ENCODE measurements at regions of chr14 and their contacts with region 1.

Region 1: GRCh38 chr14:21103710-21104447 is 3.0 kb downstream of the TMEM253 start:
- DNase-seq: peak; percentile 92
- H3K4me3 ChIP-seq: peak overlapping the region; percentile 82 to 86
- H3K27ac ChIP-seq: peak overlapping the region; percentile 90 to 99
- H3K4me1 ChIP-seq: peaks cover 18 to 39% of the 10 kb centered on the region in 2 experiments
- H3K27me3 ChIP-seq: no peaks in the 10 kb centered on the region
- CTCF ChIP-seq: peak; percentile 65
- EP300 ChIP-seq: peak in 1 of 2 experiments; percentile 82; a peak in 2 of 4 replicates
- RAD21 ChIP-seq: no peak

Region 2: DNA sequence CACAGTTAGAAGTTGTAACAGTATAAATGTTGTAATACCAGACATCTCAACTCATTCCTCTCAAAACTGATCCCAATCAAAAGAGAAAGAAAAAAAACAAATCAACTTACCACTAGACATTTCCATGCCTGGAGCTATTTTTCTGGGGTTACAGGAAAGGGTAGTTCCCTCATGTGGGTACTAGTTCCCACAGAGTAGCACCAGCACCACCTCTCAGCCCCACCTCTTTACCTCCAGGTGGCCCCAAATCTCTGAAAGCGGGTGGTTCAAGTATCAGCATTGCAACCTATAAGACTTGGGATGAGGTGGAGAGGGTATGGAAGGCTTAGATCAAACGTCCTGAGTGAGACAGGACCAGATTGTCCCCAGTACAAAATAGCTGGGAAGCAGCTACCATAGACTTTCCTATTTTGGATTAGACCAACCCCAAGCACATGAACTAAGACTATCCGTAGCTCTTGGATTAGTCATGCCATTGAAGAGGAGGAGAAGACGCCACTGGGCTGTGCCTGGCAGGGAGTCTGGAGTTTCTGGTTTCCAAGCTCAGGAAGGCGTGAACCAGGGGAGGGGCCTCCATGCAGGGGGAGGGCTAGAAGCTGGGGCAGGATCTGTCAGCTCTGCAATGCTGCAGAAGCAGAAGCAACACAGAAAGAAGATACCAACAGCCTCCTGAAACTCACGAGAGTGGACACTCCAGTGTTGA is 105.1 kb before region 1 on chr14 and contains the start of gene SLC39A2:
- CTCF ChIA-PET with region 1: interaction called, 24 read pairs
- POLR2A ChIA-PET with region 1: interaction called, 4 read pairs
- DNase-seq: no peak
- H3K4me3 ChIP-seq: no peak within 1 kb of the TSS
- H3K27ac ChIP-seq: no peak within 1 kb of the TSS
- H3K4me1 ChIP-seq: no peaks in the 10 kb centered on the region; a peak in 1 of 4 replicates
- H3K27me3 ChIP-seq: no peaks in the 10 kb centered on the region
- CTCF ChIP-seq: no peak
- EP300 ChIP-seq: no peak
- RAD21 ChIP-seq: no peak
- polyA plus RNA-seq, gene SLC39A2: not detected in 2 replicates

Region 3: GRCh38 chr14:21014761-21015190 is 89.1 kb before region 1 on chr14:
- CTCF ChIA-PET with region 1: interaction called, 555 read pairs
- POLR2A ChIA-PET with region 1: interaction called, 8 read pairs
- DNase-seq: peak; percentile 75
- H3K4me3 ChIP-seq: no peak overlapping the region; a peak in 1 of 4 replicates
- H3K27ac ChIP-seq: no peak overlapping the region
- H3K4me1 ChIP-seq: no peaks in the 10 kb centered on the region; a peak in 1 of 4 replicates
- H3K27me3 ChIP-seq: peaks cover 15% of the 10 kb centered on the region
- CTCF ChIP-seq: peak; percentile 89
- EP300 ChIP-seq: no peak
- RAD21 ChIP-seq: peak; percentile 96

Region 4: GRCh38 chr14:21039585-21040369 is 64.1 kb before region 1 on chr14:
- CTCF ChIA-PET with region 1: interaction called, 25 read pairs
- POLR2A ChIA-PET with region 1: no interaction called
- DNase-seq: peak; percentile 56
- H3K4me3 ChIP-seq: no peak overlapping the region; a peak in 1 of 4 replicates
- H3K27ac ChIP-seq: no peak overlapping the region
- H3K4me1 ChIP-seq: peaks cover 13 to 20% of the 10 kb centered on the region in 2 experiments; a peak in 3 of 4 replicates
- H3K27me3 ChIP-seq: no peaks in the 10 kb centered on the region; the same call in 1 of the 2 replicates
- CTCF ChIP-seq: peak; percentile 67
- EP300 ChIP-seq: no peak
- RAD21 ChIP-seq: peak; percentile 86

Region 5: GRCh38 chr14:21071225-21072030 is 32.5 kb before region 1 on chr14:
- CTCF ChIA-PET with region 1: interaction called, 296 read pairs
- POLR2A ChIA-PET with region 1: interaction called, 19 read pairs
- DNase-seq: peak; percentile 95
- H3K4me3 ChIP-seq: peak overlapping the region; percentile 81 to 89
- H3K27ac ChIP-seq: peak overlapping the region; percentile 98 to 99
- H3K4me1 ChIP-seq: peaks cover 22 to 37% of the 10 kb centered on the region in 2 experiments
- H3K27me3 ChIP-seq: no peaks in the 10 kb centered on the region
- CTCF ChIP-seq: no peak
- EP300 ChIP-seq: peak in 1 of 2 experiments; percentile 25; a peak in 1 of 4 replicates
- RAD21 ChIP-seq: 0 out of 2 replicates have a peak, but pooled peaks have one; percentile 2

Region 6: DNA sequence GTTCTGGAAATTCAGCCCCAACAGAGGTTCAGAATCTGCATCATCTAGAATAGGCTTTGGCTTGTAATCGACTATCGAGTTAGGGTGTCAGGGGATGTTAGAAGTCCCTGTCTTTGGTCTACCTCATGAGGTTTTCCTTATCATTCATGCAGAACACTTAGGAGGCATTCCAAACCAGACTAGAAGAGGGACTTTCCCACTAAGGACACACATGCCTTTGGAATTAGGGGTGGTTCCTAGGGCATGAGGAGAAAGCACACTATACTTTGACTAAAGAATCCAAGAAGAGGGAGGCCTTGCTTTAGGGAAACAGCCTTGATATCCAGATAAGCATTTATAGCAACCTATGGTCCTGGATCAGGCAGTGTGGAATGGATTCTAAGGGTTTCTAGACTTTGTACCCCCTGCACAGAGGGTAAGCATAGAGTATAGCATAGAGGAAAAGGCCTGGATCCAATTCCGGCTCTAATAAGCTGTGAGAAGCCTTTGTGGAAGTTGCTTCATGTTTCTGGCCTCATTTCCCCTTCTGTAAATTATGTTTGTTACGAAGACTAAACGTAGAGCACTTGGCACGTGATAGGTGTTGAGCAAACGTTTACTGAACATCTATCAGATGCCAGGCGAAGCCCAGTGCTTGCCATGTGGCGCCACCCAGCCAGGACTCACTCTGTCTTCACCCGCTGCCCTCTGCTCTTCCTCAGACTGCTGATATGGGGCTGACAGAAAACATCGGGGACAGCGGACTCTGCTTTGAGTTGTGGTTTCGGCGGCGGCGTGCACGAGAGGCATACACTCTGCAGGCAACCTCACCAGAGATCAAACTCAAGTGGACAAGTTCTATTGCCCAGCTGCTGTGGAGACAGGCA is 18.7 kb before region 1 on chr14:
- CTCF ChIA-PET with region 1: interaction called, 68 read pairs
- POLR2A ChIA-PET with region 1: interaction called, 3 read pairs
- DNase-seq: peak; percentile 15
- H3K4me3 ChIP-seq: no peak overlapping the region
- H3K27ac ChIP-seq: peak overlapping the region; percentile 29 to 89
- H3K4me1 ChIP-seq: peaks cover 9 to 24% of the 10 kb centered on the region in 2 experiments; a peak in 3 of 4 replicates
- H3K27me3 ChIP-seq: no peaks in the 10 kb centered on the region
- CTCF ChIP-seq: no peak
- EP300 ChIP-seq: no peak
- RAD21 ChIP-seq: no peak

Region 7: DNA sequence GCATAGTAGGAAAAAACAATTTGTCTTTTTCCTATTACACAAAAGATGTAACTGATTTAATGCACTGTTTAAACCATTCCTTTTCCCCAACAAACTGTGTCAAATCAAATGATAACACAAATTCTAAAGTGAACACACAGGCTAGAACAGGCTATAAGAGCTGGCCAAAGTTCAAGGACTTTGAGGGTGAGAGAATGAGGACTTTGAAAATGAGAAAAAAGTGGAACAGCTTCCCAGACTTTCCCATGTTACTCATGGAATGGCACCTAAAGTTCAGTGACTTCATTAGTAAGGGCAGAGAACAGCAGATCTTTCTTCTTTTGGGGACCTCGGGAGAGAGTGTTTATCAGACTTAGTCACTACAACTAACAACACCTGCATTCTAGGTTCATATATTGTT is 19.6 kb after region 1 on chr14:
- CTCF ChIA-PET with region 1: interaction called, 29 read pairs
- POLR2A ChIA-PET with region 1: no interaction called
- DNase-seq: no peak
- H3K4me3 ChIP-seq: no peak overlapping the region
- H3K27ac ChIP-seq: no peak overlapping the region
- H3K4me1 ChIP-seq: no peaks in the 10 kb centered on the region
- H3K27me3 ChIP-seq: peaks cover 7% of the 10 kb centered on the region; the same call in 1 of the 2 replicates
- CTCF ChIP-seq: no peak
- EP300 ChIP-seq: no peak
- RAD21 ChIP-seq: no peak

Region 8: DNA sequence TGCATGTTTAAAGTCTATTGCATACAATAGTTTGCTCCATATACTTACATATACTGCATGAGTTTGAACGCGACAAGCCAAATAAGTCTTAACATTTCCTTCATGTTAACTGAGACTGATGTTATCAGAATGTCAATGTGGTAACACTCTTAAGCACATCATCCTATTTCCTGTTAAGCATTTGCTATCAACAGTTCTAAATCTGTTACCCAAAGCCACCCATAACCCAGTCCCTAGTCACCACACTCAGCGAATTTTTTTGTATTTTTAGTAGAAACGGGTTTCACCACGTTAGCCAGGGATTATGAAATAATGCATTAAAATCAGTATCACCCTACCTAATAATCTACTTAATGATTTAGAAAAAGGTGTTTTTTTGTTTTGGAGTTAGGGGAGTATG is 125.9 kb after region 1 on chr14:
- CTCF ChIA-PET with region 1: no interaction called
- POLR2A ChIA-PET with region 1: no interaction called
- DNase-seq: no peak
- H3K4me3 ChIP-seq: no peak overlapping the region
- H3K27ac ChIP-seq: no peak overlapping the region
- H3K4me1 ChIP-seq: peaks cover 0 to 2% of the 10 kb centered on the region in 2 experiments; a peak in 1 of 4 replicates
- H3K27me3 ChIP-seq: no peaks in the 10 kb centered on the region
- CTCF ChIP-seq: no peak
- EP300 ChIP-seq: no peak
- RAD21 ChIP-seq: no peak

Region 9: GRCh38 chr14:21383848-21384493 is 280.1 kb after region 1 on chr14 and contains the start of gene SUPT16H:
- CTCF ChIA-PET with region 1: no interaction called
- POLR2A ChIA-PET with region 1: no interaction called
- DNase-seq: peak; percentile 88
- H3K4me3 ChIP-seq: peak within 1 kb of the TSS; percentile 77 to 83
- H3K27ac ChIP-seq: peak within 1 kb of the TSS; percentile 94 to 98
- H3K4me1 ChIP-seq: peaks cover 18 to 19% of the 10 kb centered on the region in 2 experiments; a peak in 3 of 4 replicates
- H3K27me3 ChIP-seq: no peaks in the 10 kb centered on the region
- CTCF ChIP-seq: no peak
- EP300 ChIP-seq: peak in 1 of 2 experiments; percentile 40; a peak in 1 of 4 replicates
- RAD21 ChIP-seq: no peak
- polyA plus RNA-seq, gene SUPT16H: 53.7 and 65.6 TPM in 2 replicates

Measured in SK-N-SH (cell line).